GM12878 (cell line): ENCODE measurements at regions of chr5 and their contacts with region 1.

Region 1: GRCh38 chr5:55636683-55637082 is 75.4 kb downstream of the SLC38A9 start:
- DNase-seq: no peak
- ATAC-seq: no peak
- H3K4me3 ChIP-seq: no peak overlapping the region
- H3K27ac ChIP-seq: no peak overlapping the region
- H3K4me1 ChIP-seq: peaks cover 8% of the 10 kb centered on the region; the same call in 1 of the 2 replicates
- H3K27me3 ChIP-seq: no peaks in the 10 kb centered on the region
- CTCF ChIP-seq: no peak
- EP300 ChIP-seq: no peak
- POLR2A ChIP-seq: no peak
- RAD21 ChIP-seq: no peak

Region 2: DNA sequence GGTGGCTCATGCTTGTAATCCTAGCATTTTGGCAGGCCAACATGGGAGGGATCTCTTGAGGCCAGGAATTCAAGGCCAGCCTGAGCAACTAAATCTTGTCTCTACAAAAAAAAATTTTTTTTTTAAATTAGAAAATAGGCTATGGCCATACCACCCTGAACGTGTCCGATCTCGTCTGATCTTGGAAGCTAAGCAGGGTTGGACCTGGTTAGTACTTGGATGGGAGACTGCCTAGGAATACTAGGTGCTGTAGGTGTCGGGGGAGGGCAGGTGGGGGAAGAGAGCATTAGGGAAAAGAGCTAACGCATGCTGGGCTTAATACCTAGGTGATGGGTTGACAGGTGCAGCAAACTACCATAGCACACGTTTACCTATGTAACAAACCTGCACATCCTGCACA is 140.6 kb after region 1 on chr5:
- CTCF ChIA-PET with region 1: no interaction called
- POLR2A ChIA-PET with region 1: interaction called, 10 read pairs
- RAD21 ChIA-PET with region 1: no interaction called
- SMC1A ChIA-PET with region 1: no interaction called
- in situ Hi-C with region 1: no loop called
- intact Hi-C with region 1: no loop called
- DNase-seq: no peak
- ATAC-seq: no peak
- H3K4me3 ChIP-seq: no peak overlapping the region
- H3K27ac ChIP-seq: no peak overlapping the region
- H3K4me1 ChIP-seq: no peaks in the 10 kb centered on the region
- H3K27me3 ChIP-seq: no peaks in the 10 kb centered on the region
- CTCF ChIP-seq: no peak
- EP300 ChIP-seq: no peak
- POLR2A ChIP-seq: no peak
- RAD21 ChIP-seq: no peak